AG04449 (cell line): ENCODE measurements at regions of chr14 and their contacts with region 1.

Region 1: GRCh38 chr14:89178802-89179535 is 238.1 kb downstream of the FOXN3 start:
- DNase-seq: peak; percentile 44
- H3K4me3 ChIP-seq: no peak overlapping the region
- CTCF ChIP-seq: no peak

Region 2: DNA sequence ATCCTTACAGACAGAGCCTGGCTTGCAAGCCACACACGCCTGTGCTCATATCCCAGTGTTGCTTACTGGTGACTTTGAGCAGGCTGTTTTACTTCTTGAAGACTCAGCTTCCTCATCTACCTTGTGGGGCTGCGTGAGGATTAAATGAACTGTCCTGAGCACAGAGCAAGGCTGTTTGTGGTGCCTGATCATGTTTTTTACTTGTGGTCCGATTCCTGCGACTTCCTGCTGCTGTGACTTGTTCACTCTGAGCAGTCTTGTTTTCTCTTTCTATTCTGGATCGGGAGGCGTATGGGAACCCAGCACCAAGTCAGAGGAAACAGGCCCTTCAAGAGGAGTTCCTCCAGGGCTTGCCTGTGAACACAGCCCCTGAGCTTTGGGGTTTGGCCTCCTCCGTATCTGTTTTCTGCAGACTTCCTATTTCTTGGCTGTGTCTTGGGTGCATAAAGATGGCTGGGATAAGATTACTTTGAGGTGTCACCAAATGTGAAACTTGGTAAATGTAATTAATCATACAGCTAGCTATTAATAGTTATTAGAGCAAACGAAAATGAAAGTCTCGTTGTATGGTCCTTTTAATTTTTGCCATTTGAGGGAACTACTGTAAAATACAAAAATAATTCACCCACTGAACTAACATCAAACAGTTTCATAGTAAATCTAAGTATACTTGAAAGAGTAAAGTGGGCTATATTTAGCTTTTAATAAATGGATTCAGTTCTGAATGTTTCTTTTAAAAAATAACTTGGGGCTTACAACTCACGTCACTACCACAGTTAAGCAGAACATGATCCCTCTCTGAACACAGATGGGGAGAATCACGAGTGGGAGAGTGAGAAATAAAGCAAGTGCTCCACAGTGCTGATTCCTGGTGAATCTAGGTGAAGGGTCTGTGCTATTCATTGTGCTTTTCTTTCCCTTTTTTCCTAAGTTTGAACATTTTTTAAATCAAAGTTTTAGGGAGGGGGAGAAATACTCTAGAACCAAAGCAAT is 13.5 kb before region 1 on chr14:
- CTCF ChIA-PET with region 1: interaction called, 18 read pairs
- POLR2A ChIA-PET with region 1: no interaction called
- DNase-seq: no peak
- H3K4me3 ChIP-seq: no peak overlapping the region
- CTCF ChIP-seq: no peak